Heart left ventricle (tissue), 16 donors: ENCODE measurements at regions of chr1 and their contacts with region 1.

Region 1: DNA sequence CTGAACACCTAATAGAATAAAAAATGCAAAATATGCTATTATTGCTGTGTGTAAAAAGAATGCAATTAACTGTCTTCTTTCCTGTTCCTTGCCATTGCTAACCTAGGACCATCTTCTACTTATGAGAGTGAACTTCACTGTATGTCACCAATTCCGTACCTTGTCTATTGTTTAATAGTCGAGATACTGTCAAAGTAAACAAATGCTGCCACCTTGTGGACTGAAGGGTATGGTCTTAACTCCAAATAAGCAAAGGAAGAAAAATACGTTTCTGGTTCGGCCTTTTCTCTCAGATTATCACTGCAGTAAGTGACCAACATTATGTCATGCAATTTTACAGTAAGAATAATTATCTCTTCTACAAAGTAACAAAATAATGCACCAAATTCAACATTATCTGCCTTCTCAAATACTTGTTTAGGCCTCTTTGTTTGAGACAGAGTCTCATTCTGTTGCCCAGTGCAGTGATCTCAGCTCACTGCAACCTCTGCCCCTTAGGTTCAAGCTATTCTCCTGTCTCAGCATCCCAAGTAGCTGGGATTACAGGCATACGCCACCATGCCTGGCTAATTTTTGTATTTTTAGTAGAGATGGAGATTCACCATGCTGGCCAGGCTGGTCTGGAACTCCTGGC is 133.4 kb downstream of the COP1 start:
- DNase-seq: peak in 2 of 5 donors; percentile 32 to 41
- ATAC-seq: peak in 3 of 4 donors; percentile 67 to 78 (median 71)
- H3K4me3 ChIP-seq: no peak overlapping the region
- H3K27ac ChIP-seq: no peak overlapping the region
- H3K4me1 ChIP-seq: peaks cover 0 to 7% (median 0%) of the 10 kb centered on the region in 12 donors
- H3K27me3 ChIP-seq: no peaks in the 10 kb centered on the region
- CTCF ChIP-seq: peak; percentile 59 to 85 (median 71)
- POLR2A ChIP-seq: no peak

Region 2: DNA sequence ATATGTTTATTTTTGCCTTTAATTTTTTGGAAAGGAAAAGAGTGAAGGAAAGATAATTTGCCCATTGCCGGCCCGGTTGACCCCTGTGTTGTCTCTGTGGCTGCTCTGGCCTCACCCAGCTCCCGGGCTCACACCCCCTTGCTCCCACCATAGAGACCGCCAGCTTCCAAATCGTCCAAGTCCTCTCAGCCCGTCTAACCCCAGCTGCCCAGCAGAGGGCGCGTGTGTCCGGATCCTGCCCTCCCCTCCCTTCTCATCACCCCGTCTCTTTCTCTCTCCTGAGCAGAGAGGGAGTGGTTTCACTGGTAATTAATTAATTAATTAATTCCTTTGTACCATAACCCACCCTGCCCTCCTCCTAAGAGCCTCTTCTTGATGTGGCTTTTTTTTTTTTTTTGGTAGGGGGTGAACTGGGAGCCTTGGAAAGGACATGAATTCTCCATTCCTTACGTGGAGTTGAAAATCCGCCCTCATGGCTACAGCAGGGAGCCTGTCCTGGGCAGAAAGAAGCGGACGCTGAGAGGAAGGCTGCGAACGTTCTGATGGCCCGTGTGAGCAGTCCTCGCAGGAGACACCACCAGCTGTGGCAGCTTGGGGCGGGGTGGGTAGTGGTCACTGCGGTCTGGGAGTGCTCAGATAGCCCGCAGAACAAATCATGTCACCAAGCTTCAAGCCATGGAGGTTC is 927.0 kb before region 1 on chr1:
- intact Hi-C with region 1: loop called in 6 of 10 experiments (anchors 5 to 10 kb)
- DNase-seq: peak; percentile 50 to 82 (median 61)
- ATAC-seq: peak; percentile 56 to 90 (median 81)
- H3K4me3 ChIP-seq: peak overlapping the region in 1 of 12 donors; percentile 6
- H3K27ac ChIP-seq: no peak overlapping the region
- H3K4me1 ChIP-seq: peaks cover 0 to 5% (median 0%) of the 10 kb centered on the region in 12 donors
- H3K27me3 ChIP-seq: no peaks in the 10 kb centered on the region
- CTCF ChIP-seq: peak; percentile 68 to 88 (median 76)
- POLR2A ChIP-seq: no peak

Region 3: DNA sequence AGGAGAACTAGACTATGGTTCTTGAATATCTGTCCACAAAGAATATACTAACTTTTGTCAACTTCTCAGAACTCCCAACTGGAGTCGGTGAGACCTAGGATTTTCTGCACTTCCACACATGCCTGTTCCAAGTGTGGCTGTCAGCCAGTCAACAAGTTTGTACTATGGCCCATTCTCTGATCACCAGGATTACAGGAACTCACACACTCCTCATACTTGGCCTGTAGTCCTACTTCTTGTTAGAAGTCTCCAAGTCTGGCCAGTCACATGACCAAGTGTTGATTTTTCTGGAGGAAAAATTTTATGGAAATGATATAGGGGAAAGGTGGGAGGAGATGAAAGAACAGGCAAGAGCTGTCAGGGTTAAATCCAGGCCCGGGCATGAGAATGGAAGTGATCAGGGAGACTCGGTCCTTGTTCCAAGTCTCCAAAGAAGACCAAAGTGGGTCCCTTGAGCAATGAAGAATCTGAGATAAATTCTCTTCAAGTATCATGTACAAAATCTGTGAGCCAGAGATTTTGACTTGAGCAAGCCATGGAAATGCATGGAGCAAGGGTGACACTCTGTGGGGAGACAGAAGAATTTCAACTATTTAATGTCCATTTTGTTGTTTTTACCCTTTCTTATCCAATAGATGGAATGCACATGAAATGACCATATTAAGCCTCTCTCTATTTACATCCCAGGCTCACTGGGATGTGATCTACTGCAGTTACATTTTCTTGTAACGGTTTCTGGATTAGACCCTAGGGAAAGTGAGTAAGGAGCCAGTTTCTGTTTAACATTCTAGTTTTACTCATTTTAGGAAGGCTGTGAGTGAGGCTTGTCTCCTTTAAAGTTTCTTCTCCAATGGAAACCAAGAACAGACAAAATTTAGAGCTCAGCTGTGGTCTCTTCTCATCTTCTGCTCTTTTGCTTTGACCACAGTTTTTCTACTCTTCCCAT is 770.0 kb after region 1 on chr1:
- intact Hi-C with region 1: loop called in 1 of 10 experiments (anchors 5 kb)
- DNase-seq: peak in 3 of 5 donors; percentile 22 to 38 (median 33)
- ATAC-seq: peak; percentile 19 to 55 (median 40)
- H3K4me3 ChIP-seq: no peak overlapping the region
- H3K27ac ChIP-seq: no peak overlapping the region
- H3K4me1 ChIP-seq: peaks cover 0 to 25% (median 2%) of the 10 kb centered on the region in 12 donors
- H3K27me3 ChIP-seq: no peaks in the 10 kb centered on the region
- CTCF ChIP-seq: peak; percentile 42 to 77 (median 61)
- POLR2A ChIP-seq: no peak